IMR-90 (cell line): ENCODE measurements at regions of chr1 and their contacts with region 1.

Region 1: DNA sequence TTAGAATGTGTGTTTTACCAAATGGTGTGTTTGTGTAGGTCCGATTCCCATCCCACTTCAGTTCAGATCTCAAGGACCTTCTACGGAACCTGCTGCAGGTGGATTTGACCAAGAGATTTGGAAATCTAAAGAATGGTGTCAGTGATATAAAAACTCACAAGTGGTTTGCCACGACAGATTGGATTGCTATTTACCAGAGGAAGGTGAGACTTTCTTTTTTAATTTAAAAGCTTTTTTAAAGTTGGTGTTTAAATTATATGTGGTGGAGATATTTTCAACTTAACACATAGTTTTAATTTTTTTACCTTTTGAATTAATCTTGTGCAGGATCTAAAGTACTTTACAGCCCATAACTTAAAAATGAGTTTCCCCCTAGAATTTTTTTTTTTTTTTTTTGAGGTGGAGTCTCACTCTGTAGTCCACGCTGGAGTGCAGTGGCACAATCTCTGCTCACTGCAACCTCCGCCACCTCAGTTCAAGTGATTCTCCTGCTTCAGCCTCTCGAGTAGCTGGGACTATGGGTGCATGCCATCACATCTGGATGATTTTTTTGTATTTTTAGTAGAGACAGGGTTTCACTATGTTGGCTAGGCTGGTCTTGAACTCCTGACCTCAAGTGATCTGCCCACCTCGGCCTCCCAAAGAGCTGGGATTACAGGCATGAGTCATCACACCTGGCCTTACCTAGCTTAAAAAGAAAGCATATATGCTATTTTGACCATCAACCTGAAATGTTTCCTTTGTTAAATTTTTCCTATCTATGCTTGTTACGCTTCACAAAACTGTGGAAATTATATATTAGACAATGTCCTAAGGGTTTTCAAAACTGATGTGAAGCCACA is 70.3 kb downstream of the PRKACB start:
- DNase-seq: no peak
- ATAC-seq: no peak
- H3K4me3 ChIP-seq: no peak overlapping the region
- H3K27ac ChIP-seq: no peak overlapping the region
- H3K4me1 ChIP-seq: no peaks in the 10 kb centered on the region
- H3K27me3 ChIP-seq: no peaks in the 10 kb centered on the region
- CTCF ChIP-seq: no peak
- POLR2A ChIP-seq: no peak
- RAD21 ChIP-seq: no peak

Region 2: DNA sequence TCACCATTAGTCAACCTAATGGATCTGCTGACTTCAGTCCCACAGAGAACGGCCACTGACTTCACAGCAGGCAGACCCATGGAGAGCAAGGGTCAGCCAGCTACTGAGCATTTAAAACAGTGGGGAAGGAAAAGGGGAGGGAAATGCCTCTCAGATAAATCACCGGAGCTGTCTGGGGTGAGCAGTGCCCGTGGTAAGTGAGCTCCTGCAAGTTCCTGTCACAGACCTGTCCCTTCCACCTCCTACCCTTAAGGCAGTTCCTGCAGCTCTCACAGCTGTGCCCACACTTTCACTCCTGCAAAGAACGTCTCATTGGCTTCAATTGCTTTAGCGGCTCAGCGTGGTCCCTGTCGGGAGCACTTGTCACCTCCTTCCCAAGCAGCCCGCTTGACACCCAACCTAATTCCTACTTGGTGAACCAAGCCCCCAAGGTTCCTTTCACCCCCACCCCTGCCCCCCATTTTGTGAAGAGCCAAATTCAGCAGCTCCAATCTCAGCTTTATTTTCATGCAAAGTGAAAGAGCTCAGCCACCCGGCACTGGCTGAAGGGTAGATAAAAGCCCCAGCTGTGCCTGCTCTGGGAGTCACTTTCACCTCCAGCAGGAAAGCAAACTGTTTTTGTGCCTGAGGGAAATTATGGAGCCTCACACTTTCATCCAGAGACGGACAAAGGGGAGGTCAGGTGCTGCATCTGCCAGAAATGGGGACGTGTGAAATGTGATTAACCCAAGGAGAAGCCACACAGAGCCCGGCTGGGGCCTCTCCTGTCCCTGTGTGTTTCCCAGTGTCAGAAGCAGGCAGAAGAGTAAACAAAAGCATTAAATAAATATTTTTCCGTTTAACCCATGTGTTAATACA is 521.6 kb before region 1 on chr1:
- CTCF ChIA-PET with region 1: no interaction called
- POLR2A ChIA-PET with region 1: no interaction called
- dilution Hi-C with region 1: no loop called
- in situ Hi-C with region 1: no loop called
- intact Hi-C with region 1: loop called (anchors 10 kb)
- DNase-seq: peak; percentile 0
- ATAC-seq: peak; percentile 27
- H3K4me3 ChIP-seq: no peak overlapping the region
- H3K27ac ChIP-seq: no peak overlapping the region
- H3K4me1 ChIP-seq: no peaks in the 10 kb centered on the region
- H3K27me3 ChIP-seq: no peaks in the 10 kb centered on the region; the same call in 1 of the 2 replicates
- CTCF ChIP-seq: no peak
- POLR2A ChIP-seq: no peak
- RAD21 ChIP-seq: no peak

Region 3: DNA sequence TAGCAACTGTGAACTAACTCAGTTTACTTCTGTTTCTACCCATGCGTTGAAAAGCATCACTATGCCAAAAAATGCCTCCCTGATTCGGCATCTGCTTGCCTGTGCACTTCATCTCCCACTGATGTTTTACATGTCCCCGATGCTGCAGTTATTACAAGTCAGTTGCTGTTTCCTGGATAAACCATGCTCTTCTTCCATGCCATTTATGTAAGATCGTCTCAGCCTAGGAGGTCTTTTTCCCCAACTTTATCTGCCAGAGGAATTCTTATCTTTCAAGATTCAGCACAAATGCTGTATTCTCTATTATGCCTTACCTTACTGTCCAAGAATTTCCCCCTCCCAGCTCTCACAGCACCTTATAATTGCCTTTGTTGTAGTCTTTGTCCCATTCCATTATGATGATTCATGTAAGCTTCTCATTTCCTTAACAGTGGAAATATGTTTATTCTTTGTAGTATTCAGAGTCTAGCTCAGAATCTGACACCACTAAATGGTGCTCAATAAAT is 40.2 kb before region 1 on chr1:
- CTCF ChIA-PET with region 1: no interaction called
- POLR2A ChIA-PET with region 1: no interaction called
- dilution Hi-C with region 1: no loop called
- in situ Hi-C with region 1: no loop called
- intact Hi-C with region 1: loop called (anchors 5 kb)
- DNase-seq: peak; percentile 65
- ATAC-seq: peak; percentile 73
- H3K4me3 ChIP-seq: no peak overlapping the region
- H3K27ac ChIP-seq: 0 out of 2 replicates have a peak overlapping the region, but pooled peaks have one; percentile 2
- H3K4me1 ChIP-seq: peaks cover 3% of the 10 kb centered on the region; the same call in 1 of the 2 replicates
- H3K27me3 ChIP-seq: no peaks in the 10 kb centered on the region
- CTCF ChIP-seq: no peak
- POLR2A ChIP-seq: no peak
- RAD21 ChIP-seq: no peak

Region 4: DNA sequence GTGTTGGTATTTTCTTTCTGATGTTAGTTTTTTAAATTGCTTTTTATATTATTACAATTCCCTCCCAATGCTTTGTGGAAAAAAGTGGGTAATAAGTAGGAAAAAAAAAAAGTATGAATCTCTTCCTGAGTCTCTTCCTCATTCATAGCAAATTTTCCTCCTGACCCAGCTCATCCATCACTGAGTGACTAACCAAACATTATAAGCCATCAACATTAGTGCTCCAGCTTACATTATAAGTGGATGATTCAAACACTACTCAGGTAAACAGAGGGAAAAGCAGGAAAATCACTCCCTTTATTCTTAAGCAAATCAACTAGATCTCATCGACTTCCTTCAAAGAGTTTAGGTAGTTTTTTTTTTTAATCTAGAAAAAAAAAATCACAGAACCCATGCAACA is 71.7 kb after region 1 on chr1:
- CTCF ChIA-PET with region 1: no interaction called
- POLR2A ChIA-PET with region 1: no interaction called
- dilution Hi-C with region 1: no loop called
- in situ Hi-C with region 1: no loop called
- intact Hi-C with region 1: loop called (anchors 10 kb)
- DNase-seq: peak; percentile 94
- ATAC-seq: peak; percentile 75
- H3K4me3 ChIP-seq: no peak overlapping the region
- H3K27ac ChIP-seq: no peak overlapping the region
- H3K4me1 ChIP-seq: peaks cover 3% of the 10 kb centered on the region; the same call in 1 of the 2 replicates
- H3K27me3 ChIP-seq: no peaks in the 10 kb centered on the region
- CTCF ChIP-seq: no peak
- POLR2A ChIP-seq: no peak
- RAD21 ChIP-seq: no peak